ENCODE measurements at regions of chr20 and their contacts with region 1.

Region 1: GRCh38 chr20:13825465-13825864 is 40.6 kb downstream of the NDUFAF5 start:
- DNase-seq: no peak
- H3K4me3 ChIP-seq: no peak overlapping the region
- H3K27ac ChIP-seq: no peak overlapping the region
- H3K4me1 ChIP-seq: no peaks in the 10 kb centered on the region
- H3K27me3 ChIP-seq: no peaks in the 10 kb centered on the region
- CTCF ChIP-seq: no peak
- EP300 ChIP-seq: no peak
- RAD21 ChIP-seq: no peak

Region 2: DNA sequence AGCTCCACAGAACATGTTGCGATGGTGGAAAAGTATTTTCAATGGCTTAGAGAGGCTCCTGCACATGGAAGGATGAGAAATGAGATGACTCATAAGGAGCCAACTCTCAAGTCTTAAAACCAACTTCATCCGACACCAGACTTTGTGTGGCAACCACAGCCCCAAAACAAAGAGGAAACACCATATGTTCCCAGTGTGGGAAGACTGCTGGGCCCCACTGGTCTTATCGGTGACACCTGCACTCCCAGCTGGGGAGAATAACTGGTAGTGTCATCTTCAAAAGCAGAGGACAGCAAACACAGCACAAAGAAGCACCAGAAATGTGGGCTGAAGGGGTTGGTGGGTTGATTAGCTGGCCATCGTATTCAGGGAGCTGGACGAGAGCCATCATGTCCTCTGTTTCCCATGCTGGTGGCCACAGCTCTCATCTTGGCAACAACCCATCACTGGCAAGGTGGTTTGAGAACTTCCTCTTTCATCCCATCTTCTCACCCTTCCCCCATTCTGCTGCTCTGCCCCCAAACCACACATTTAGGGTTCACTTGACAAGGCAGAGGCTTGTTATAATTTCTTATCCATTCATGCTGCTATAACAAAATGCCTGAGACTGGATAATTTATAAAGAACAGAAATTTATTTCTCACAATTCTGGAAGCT is 140.8 kb before region 1 on chr20:
- CTCF ChIA-PET with region 1: no interaction called
- POLR2A ChIA-PET with region 1: no interaction called
- DNase-seq: no peak
- H3K4me3 ChIP-seq: no peak overlapping the region
- H3K27ac ChIP-seq: no peak overlapping the region
- H3K4me1 ChIP-seq: no peaks in the 10 kb centered on the region
- H3K27me3 ChIP-seq: no peaks in the 10 kb centered on the region
- CTCF ChIP-seq: no peak
- EP300 ChIP-seq: no peak
- RAD21 ChIP-seq: no peak

Region 3: GRCh38 chr20:13852306-13852705 is 26.8 kb after region 1 on chr20:
- CTCF ChIA-PET with region 1: no interaction called
- POLR2A ChIA-PET with region 1: no interaction called
- DNase-seq: no peak
- H3K4me3 ChIP-seq: no peak overlapping the region
- H3K27ac ChIP-seq: no peak overlapping the region
- H3K4me1 ChIP-seq: no peaks in the 10 kb centered on the region
- H3K27me3 ChIP-seq: no peaks in the 10 kb centered on the region; the same call in 1 of the 2 replicates
- CTCF ChIP-seq: no peak
- EP300 ChIP-seq: no peak
- RAD21 ChIP-seq: no peak

Region 4: GRCh38 chr20:14055127-14055742 is 229.8 kb after region 1 on chr20:
- CTCF ChIA-PET with region 1: interaction called, 44 read pairs
- POLR2A ChIA-PET with region 1: no interaction called
- DNase-seq: peak; percentile 33
- H3K4me3 ChIP-seq: no peak overlapping the region
- H3K27ac ChIP-seq: no peak overlapping the region
- H3K4me1 ChIP-seq: no peaks in the 10 kb centered on the region
- H3K27me3 ChIP-seq: no peaks in the 10 kb centered on the region
- CTCF ChIP-seq: peak; percentile 79
- EP300 ChIP-seq: no peak
- RAD21 ChIP-seq: peak; percentile 85